PC-9 (cell line): ENCODE measurements at regions of chr17 and their contacts with region 1.

Region 1: GRCh38 chr17:40209404-40210093 is 9.6 kb upstream of the WIPF2 start:
- DNase-seq: no peak
- H3K4me3 ChIP-seq: no peak overlapping the region
- H3K27ac ChIP-seq: no peak overlapping the region
- H3K4me1 ChIP-seq: no peaks in the 10 kb centered on the region
- H3K27me3 ChIP-seq: no peaks in the 10 kb centered on the region
- CTCF ChIP-seq: no peak

Region 2: GRCh38 chr17:39069114-39069756 is 1140.3 kb before region 1 on chr17:
- CTCF ChIA-PET with region 1: no interaction called
- POLR2A ChIA-PET with region 1: no interaction called
- intact Hi-C with region 1: no loop called
- DNase-seq: peak in 1 of 2 experiments; percentile 35
- H3K4me3 ChIP-seq: no peak overlapping the region
- H3K27ac ChIP-seq: no peak overlapping the region
- H3K4me1 ChIP-seq: no peaks in the 10 kb centered on the region
- H3K27me3 ChIP-seq: no peaks in the 10 kb centered on the region
- CTCF ChIP-seq: peak; percentile 73

Region 3: DNA sequence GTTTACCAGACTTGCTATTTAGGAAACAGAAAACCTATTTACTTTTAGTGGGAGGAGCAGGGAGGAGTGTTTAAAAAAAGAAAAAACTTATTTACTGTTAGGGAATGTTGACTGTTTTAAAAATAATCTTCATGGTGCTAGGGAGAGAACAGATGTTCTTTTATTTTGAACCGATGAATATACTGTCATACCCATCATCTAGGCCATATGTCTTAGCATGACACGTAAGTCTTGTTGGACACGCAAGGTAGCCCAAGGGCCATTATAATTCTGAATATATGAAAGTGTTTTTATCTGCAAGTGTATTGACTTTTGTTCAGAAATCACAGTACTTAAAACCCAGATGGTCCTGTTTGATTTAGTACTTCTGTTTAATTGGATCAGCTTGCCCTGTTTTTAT is 21.1 kb after region 1 on chr17:
- CTCF ChIA-PET with region 1: interaction called, 12 read pairs
- POLR2A ChIA-PET with region 1: no interaction called
- intact Hi-C with region 1: no loop called
- DNase-seq: no peak
- H3K4me3 ChIP-seq: no peak overlapping the region
- H3K27ac ChIP-seq: no peak overlapping the region
- H3K4me1 ChIP-seq: no peaks in the 10 kb centered on the region
- H3K27me3 ChIP-seq: no peaks in the 10 kb centered on the region
- CTCF ChIP-seq: no peak

Region 4: GRCh38 chr17:40510328-40510648 is 300.7 kb after region 1 on chr17:
- CTCF ChIA-PET with region 1: no interaction called
- POLR2A ChIA-PET with region 1: no interaction called
- intact Hi-C with region 1: no loop called
- DNase-seq: peak; percentile 88 to 95
- H3K4me3 ChIP-seq: no peak overlapping the region
- H3K27ac ChIP-seq: no peak overlapping the region
- H3K4me1 ChIP-seq: peaks cover 75% of the 10 kb centered on the region
- H3K27me3 ChIP-seq: no peaks in the 10 kb centered on the region
- CTCF ChIP-seq: no peak